Endothelial cell of umbilical vein (primary cell): ENCODE measurements at regions of chr17 and their contacts with region 1.

Region 1: GRCh38 chr17:31900877-31901276 is 631 bp downstream of the UTP6 start:
- DNase-seq: no peak
- H3K4me3 ChIP-seq: peak overlapping the region; percentile 71 to 92 (median 71)
- H3K27ac ChIP-seq: no peak overlapping the region
- H3K4me1 ChIP-seq: peaks cover 5% of the 10 kb centered on the region
- H3K27me3 ChIP-seq: no peaks in the 10 kb centered on the region
- CTCF ChIP-seq: no peak
- POLR2A ChIP-seq: no peak

Region 2: DNA sequence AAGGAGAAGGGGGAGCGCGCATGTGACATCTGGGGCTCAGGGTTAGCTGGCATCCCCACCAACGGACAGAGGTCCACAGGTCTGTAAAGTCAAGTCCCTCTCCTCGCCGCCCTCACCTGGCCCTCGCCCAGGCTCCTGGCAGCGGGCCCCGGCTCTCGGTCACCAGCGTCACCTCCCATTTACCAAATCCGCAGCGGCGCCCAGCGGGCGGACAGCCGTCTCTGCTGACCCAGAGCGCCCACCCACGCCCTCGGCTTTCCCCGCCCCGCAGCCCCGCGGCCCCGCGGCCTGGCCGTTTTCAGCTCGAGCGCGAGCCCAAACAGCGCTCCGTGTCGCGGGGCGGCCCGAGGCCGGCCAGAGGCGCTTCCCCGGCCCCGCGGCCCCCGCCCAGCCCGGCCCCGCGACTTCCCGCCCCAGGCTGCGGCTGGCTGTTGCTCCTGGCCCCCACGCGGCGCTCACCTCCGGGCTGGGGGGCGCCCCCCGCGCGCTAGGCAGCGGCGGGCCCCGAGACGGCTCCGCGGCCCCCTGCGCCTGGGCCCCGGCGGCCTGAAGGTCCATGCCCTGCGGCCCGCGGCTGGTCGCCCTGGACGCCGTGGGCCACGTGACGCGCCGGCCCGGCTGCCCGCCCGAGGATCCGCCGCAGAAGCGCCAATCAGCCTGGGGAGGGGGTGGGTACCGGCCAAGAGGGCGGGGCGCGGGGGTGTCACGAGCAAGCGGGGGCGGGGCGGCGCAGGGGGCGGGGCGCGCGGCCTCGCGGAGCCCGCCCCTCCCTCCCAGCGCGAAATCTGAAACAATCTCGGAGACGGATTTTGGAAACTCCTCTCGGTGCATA is 42.0 kb before region 1 on chr17 and contains the start of gene COPRS:
- CTCF ChIA-PET with region 1: interaction called, 3 read pairs
- POLR2A ChIA-PET with region 1: no interaction called
- dilution Hi-C with region 1: no loop called
- intact Hi-C with region 1: loop called (anchors 1 kb)
- DNase-seq: peak; percentile 78
- H3K4me3 ChIP-seq: peak within 1 kb of the TSS; percentile 44 to 82 (median 77)
- H3K27ac ChIP-seq: peak within 1 kb of the TSS; percentile 4
- H3K4me1 ChIP-seq: peaks cover 12% of the 10 kb centered on the region
- H3K27me3 ChIP-seq: no peaks in the 10 kb centered on the region
- CTCF ChIP-seq: peak in 1 of 2 donors; percentile 8
- POLR2A ChIP-seq: peak; percentile 67
- total RNA-seq, gene COPRS: 48.0 and 48.8 TPM in 2 replicates

Region 3: DNA sequence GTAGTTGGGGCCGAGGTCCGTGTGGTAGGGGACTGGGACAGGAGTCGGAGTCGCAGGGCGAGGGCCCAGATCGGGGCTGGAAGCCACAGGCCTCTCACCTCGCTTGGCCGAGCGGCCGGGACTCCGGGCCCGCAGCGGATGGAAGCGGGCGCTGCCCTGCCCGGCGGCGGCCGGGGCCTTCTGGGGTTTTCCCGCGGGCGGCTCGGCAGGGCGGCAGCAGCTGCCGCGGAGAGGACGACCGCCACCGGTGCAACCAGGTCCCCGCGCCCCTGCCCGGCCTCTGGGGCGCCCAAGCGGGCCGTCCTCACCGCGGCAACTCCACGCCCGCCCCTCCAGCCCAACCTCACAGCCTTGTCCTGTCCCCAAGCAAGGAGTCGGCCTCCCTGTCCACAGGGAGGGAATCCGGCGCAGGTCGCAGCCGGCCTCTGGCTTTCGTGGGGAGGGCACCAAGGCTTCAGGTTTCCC is 16.2 kb after region 1 on chr17:
- CTCF ChIA-PET with region 1: interaction called, 15 read pairs
- POLR2A ChIA-PET with region 1: no interaction called
- dilution Hi-C with region 1: no loop called
- intact Hi-C with region 1: loop called (anchors 1 kb)
- DNase-seq: no peak
- H3K4me3 ChIP-seq: peak overlapping the region in 1 of 3 experiments; percentile 19
- H3K27ac ChIP-seq: no peak overlapping the region
- H3K4me1 ChIP-seq: peaks cover 4% of the 10 kb centered on the region
- H3K27me3 ChIP-seq: no peaks in the 10 kb centered on the region
- CTCF ChIP-seq: no peak
- POLR2A ChIP-seq: no peak

Region 4: GRCh38 chr17:32136856-32137255 is 236.0 kb after region 1 on chr17:
- CTCF ChIA-PET with region 1: interaction called, 3 read pairs
- POLR2A ChIA-PET with region 1: no interaction called
- dilution Hi-C with region 1: no loop called
- intact Hi-C with region 1: loop called (anchors 1 kb)
- DNase-seq: no peak
- H3K4me3 ChIP-seq: no peak overlapping the region
- H3K27ac ChIP-seq: no peak overlapping the region
- H3K4me1 ChIP-seq: peaks cover 8% of the 10 kb centered on the region
- H3K27me3 ChIP-seq: no peaks in the 10 kb centered on the region
- CTCF ChIP-seq: no peak
- POLR2A ChIP-seq: no peak